A549 (cell line): ENCODE measurements at regions of chr17 and their contacts with region 1.

Region 1: DNA sequence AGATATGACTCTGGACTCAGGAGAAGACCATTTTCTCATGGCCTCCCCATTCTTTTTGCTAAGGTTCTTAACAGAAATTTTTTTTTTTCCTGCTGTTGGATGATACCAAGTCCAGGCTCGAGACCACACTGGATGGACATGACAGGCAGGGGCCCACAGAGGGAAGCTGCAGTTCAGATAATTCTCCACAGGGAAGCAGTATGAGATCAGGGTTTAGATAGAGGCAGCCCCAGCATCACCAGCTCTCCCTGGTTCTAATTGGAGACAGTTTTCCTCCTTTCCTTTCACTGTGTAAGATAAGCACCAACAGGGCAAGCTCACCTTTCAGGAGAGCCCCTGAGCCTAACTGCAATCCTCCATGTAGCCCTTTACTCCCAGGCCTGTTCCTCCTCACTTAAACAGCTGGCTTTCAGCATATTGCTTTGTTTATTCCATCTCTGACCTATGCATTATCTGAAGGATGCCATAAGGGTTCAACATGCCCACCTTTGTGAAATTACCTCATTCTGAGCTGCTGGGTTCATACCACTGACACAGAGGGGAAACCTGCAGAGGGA is 108.1 kb downstream of the SNX11 start:
- DNase-seq: peak; percentile 75 to 80
- ATAC-seq: peak; percentile 97 to 99
- H3K4me3 ChIP-seq: no peak overlapping the region
- H3K27ac ChIP-seq: peak overlapping the region in 1 of 2 experiments; percentile 2; a peak in 1 of 6 replicates
- H3K4me1 ChIP-seq: no peaks in the 10 kb centered on the region
- CTCF ChIP-seq: peak; percentile 85
- EP300 ChIP-seq: no peak
- POLR2A ChIP-seq: no peak
- RAD21 ChIP-seq: peak; percentile 94 to 98

Region 2: GRCh38 chr17:47470836-47471235 is 744.8 kb before region 1 on chr17:
- CTCF ChIA-PET with region 1: no interaction called
- POLR2A ChIA-PET with region 1: no interaction called
- DNase-seq: no peak
- ATAC-seq: no peak
- H3K4me3 ChIP-seq: no peak overlapping the region
- H3K27ac ChIP-seq: no peak overlapping the region
- H3K4me1 ChIP-seq: peaks cover 4% of the 10 kb centered on the region; the same call in 1 of the 3 replicates
- CTCF ChIP-seq: no peak
- EP300 ChIP-seq: no peak
- POLR2A ChIP-seq: no peak
- RAD21 ChIP-seq: no peak

Region 3: DNA sequence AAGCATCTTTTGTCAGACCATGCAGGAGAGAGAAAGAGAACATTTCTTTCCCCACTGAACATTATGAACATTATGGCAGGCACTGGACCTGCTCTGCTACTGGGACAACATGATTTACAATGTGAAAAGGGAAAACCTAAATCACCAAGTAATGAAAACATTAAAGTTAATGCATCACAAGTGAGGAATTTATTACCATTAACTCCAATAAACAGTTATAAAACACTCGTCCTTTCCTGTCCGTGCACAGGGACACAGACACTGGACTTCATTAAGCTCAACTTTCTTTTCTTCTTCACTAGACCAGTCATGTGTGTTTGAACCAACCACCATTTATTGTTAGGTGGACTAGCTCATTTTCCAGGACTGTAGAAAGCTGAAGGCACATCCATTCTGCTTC is 12.7 kb before region 1 on chr17:
- CTCF ChIA-PET with region 1: interaction called, 40 read pairs
- POLR2A ChIA-PET with region 1: no interaction called
- DNase-seq: no peak
- ATAC-seq: no peak
- H3K4me3 ChIP-seq: no peak overlapping the region
- H3K27ac ChIP-seq: no peak overlapping the region
- H3K4me1 ChIP-seq: peaks cover 10% of the 10 kb centered on the region
- CTCF ChIP-seq: no peak
- EP300 ChIP-seq: no peak
- POLR2A ChIP-seq: no peak
- RAD21 ChIP-seq: no peak

Region 4: DNA sequence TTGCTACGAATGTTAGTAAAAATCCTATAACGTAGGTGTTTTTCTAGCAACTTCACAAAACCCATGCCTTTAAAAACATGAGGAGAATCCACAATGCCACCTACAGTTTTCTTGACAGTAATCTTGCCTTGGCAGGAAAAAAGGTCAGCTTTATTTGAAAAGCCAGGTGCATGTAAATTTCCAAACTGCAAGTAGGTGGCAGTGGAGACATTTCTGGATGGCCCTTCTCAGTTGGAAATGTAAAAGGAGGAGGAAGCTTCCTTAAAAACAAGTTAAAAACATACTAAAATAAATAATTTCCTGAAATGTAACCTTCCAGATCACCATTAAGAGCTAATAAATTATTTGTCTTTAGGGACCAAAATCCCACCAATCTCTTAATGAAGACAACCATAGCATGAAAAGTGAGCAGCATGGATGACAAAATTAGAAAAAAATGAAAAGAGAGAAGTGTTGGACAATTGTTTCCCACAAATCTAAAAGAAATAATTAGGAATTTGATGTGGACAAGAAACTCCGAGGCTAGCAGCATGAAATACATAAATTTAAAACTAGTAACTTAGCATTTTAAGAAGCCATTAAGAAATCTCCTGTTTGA is 44.1 kb after region 1 on chr17:
- CTCF ChIA-PET with region 1: interaction called, 103 read pairs
- POLR2A ChIA-PET with region 1: no interaction called
- DNase-seq: peak; percentile 35 to 87
- ATAC-seq: peak; percentile 52 to 59; a peak in 4 of 6 replicates
- H3K4me3 ChIP-seq: no peak overlapping the region
- H3K27ac ChIP-seq: peak overlapping the region in 1 of 2 experiments; percentile 35; a peak in 1 of 6 replicates
- H3K4me1 ChIP-seq: peaks cover 61% of the 10 kb centered on the region
- CTCF ChIP-seq: peak; percentile 99
- EP300 ChIP-seq: no peak
- POLR2A ChIP-seq: no peak
- RAD21 ChIP-seq: peak; percentile 93

Region 5: DNA sequence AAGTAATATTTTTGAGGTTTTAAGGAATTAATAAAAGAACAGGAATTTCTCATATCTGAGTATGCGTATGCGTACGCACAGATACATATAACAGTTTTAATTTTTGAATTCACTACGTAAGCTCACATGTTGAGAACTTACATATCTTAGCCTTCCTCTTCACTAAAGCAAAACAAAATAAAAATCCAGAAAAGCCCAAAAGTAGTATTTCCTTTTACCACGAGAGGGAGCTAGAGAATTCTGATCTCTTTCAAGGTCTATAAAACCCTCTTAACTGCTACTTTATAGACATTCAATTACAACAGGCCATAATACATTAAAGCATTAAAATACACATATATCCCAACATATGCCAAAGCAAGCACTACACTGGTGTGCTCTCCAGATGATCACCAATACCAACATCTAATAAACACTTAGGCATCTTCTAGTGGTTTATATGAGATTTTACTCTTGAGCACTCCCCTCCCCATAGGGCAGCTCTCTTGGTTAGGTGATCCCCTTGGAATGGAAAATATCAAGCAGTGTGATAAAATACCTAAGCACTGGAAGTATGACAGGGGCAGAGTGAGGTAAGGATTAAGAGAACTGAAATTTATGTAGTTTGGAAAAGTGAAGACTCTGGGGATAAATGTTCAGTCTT is 120.3 kb after region 1 on chr17:
- CTCF ChIA-PET with region 1: interaction called, 18 read pairs
- POLR2A ChIA-PET with region 1: no interaction called
- DNase-seq: peak; percentile 35 to 68
- ATAC-seq: peak; percentile 71 to 74; a peak in 5 of 6 replicates
- H3K4me3 ChIP-seq: no peak overlapping the region
- H3K27ac ChIP-seq: no peak overlapping the region
- H3K4me1 ChIP-seq: peaks cover 17% of the 10 kb centered on the region
- CTCF ChIP-seq: peak; percentile 94
- EP300 ChIP-seq: no peak
- POLR2A ChIP-seq: no peak
- RAD21 ChIP-seq: peak; percentile 75 to 79

Region 6: DNA sequence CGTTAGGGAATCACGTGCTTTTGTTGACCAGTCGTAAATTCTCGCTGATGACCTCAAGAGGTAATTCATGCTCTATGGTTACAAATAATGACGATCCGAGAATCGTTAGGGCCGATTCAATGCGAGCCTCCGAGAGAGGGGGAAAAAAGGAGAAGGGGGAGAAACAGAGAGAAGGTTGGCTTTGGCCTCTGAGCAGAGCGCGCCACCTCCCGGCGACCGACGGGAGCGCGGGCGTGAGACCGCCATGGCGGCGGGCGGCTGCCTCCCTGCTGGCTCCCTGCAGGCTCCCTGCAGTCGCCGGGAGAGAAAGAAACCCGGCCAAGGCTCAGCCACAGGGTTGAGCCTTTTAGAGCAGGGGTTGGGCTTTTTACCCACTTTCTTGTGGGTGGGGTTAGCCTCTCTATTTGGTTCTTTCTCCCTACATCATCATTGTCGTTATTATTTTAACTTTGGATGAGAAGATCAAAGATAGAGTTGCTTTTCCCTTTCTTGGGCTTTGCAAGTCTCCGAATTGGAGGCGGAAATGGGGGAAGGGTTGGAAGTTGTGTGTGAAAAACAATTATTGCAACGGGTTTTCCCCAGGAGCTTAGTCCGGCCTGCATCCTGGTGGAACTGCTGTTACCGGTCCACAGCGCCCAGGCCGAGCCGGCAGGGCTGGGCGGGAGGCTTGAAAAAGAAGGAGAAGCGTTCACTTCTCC is 378.3 kb after region 1 on chr17:
- CTCF ChIA-PET with region 1: interaction called, 64 read pairs
- POLR2A ChIA-PET with region 1: no interaction called
- DNase-seq: peak; percentile 81 to 94
- ATAC-seq: peak; percentile 74 to 92
- H3K4me3 ChIP-seq: peak overlapping the region; percentile 22; the same call in 2 of the 3 replicates
- H3K27ac ChIP-seq: peak overlapping the region in 1 of 2 experiments; percentile 60; a peak in 4 of 6 replicates
- H3K4me1 ChIP-seq: peaks cover 5% of the 10 kb centered on the region
- CTCF ChIP-seq: peak; percentile 99
- EP300 ChIP-seq: no peak
- POLR2A ChIP-seq: no peak
- RAD21 ChIP-seq: peak; percentile 91 to 94